Right cardiac atrium (tissue), 5 donors: ENCODE measurements at regions of chr11 and their contacts with region 1.

Region 1: GRCh38 chr11:73866586-73866996 is 10.1 kb downstream of the COA4 start:
- DNase-seq: peak in 1 of 3 donors; percentile 23
- ATAC-seq: peak; percentile 14 to 72
- H3K4me3 ChIP-seq: no peak overlapping the region
- H3K27ac ChIP-seq: peak overlapping the region; percentile 70
- H3K4me1 ChIP-seq: peaks cover 2% of the 10 kb centered on the region
- H3K27me3 ChIP-seq: no peaks in the 10 kb centered on the region

Region 2: DNA sequence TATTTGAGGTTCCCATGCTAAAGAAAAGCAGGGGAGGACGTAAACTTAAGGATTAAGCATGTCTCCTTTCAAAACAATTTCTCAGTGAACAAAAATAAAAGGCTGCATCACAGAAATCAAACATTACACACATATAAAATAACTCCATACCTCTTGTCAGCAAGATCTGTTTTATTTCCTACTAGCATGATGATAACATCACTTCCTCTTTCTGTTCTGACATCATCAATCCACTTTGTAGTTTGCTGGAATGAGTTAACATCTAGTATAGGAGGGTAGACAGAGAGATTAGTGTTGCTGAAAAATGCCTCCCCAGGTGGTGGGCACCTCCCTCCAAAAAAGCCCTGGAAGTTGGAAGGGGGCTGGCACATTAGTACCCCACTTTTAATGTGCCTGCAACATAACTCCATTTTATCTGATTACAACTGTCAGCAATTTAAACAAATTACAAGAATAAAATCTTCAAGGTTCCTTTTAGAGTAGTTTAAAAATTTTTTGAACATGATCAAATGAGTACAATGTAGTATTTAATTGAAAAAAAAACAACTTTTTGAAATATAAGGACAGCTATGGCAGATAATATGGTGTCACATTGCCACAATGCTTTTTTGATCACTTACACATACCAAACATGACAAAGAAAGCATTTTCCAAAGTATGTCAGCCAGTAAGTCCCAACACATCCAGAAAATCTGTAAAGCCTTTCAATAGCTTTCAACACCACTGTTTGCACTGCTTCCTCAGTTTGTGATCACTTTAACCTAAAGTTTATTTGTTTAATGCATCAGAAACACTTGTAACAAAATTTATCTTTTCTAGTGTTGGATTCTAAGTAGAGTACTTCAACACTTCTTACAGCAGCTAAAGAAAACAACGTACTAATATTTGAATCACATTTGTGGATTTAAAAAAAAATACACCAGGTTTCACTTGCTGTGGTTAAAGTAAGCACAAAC is 150.2 kb before region 1 on chr11:
- intact Hi-C with region 1: no loop called
- DNase-seq: no peak
- ATAC-seq: no peak
- H3K4me3 ChIP-seq: no peak overlapping the region
- H3K27ac ChIP-seq: no peak overlapping the region
- H3K4me1 ChIP-seq: no peaks in the 10 kb centered on the region
- H3K27me3 ChIP-seq: no peaks in the 10 kb centered on the region

Region 3: DNA sequence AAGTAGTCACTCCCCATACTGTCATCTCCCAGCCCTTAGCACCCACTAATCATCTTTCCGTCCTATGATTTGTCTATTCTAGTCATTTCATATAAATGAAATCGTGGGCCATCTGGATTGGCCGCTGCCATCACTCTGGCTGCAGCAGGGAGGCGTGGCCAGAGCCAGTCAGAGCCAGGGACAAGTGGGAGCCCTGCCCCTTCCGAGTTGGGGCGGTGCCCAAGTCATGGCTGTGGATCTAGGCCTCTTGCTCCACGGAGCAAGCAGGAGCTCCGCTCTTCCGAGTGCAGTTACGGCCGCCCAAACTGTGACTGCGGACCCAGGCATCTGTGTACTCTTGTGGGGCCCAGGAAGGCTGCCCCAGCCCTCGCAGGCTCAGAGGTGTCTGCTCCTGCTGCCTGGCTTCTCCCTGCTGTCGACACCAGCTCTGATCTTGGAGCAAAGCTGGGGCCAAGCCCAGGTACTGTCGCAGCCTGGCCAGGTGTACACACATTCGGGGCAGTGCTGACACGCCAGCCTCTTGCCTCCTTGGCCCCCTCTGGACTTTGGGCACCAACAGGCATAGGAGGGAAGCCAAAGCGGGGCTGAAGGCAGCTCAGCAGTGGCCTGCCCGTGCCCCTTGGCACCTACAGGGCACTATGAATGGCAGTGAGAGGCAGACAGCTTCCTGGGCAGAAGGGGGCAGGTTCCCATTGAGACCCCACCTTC is 70.5 kb before region 1 on chr11:
- intact Hi-C with region 1: loop called in 1 of 4 experiments (anchors 10 kb)
- DNase-seq: peak; percentile 35 to 76 (median 71)
- ATAC-seq: peak; percentile 69
- H3K4me3 ChIP-seq: no peak overlapping the region
- H3K27ac ChIP-seq: no peak overlapping the region
- H3K4me1 ChIP-seq: no peaks in the 10 kb centered on the region
- H3K27me3 ChIP-seq: no peaks in the 10 kb centered on the region